GM10248 (cell line): ENCODE measurements at regions of chr5 and their contacts with region 1.

Region 1: GRCh38 chr5:57779383-57780223 is 297.0 kb upstream of the ACTBL2 start:
- DNase-seq: no peak
- CTCF ChIP-seq: peak; percentile 40

Region 2: GRCh38 chr5:57741326-57741725 is 38.3 kb before region 1 on chr5:
- CTCF ChIA-PET with region 1: interaction called, 11 read pairs
- POLR2A ChIA-PET with region 1: no interaction called
- DNase-seq: no peak
- CTCF ChIP-seq: no peak

Region 3: DNA sequence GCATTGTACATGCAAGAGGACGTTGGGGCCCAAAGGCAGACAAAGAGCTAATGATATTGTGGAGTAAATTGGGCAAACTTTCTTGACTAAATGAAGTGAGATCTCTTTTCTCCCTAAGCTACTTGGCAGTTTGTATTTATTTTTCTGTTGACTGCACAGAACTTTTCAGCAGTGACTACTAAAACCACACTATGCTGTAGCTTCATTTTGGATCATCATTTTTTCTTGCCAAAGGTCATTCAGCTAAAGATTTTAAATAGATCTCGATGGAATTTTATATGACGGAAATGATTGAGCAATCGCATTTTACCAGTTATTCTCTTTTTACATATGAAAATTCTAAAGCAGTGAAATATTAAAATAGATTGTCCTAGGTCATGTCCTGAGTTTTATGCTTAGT is 10.9 kb before region 1 on chr5:
- CTCF ChIA-PET with region 1: interaction called, 15 read pairs
- POLR2A ChIA-PET with region 1: no interaction called
- DNase-seq: no peak
- CTCF ChIP-seq: no peak

Region 4: DNA sequence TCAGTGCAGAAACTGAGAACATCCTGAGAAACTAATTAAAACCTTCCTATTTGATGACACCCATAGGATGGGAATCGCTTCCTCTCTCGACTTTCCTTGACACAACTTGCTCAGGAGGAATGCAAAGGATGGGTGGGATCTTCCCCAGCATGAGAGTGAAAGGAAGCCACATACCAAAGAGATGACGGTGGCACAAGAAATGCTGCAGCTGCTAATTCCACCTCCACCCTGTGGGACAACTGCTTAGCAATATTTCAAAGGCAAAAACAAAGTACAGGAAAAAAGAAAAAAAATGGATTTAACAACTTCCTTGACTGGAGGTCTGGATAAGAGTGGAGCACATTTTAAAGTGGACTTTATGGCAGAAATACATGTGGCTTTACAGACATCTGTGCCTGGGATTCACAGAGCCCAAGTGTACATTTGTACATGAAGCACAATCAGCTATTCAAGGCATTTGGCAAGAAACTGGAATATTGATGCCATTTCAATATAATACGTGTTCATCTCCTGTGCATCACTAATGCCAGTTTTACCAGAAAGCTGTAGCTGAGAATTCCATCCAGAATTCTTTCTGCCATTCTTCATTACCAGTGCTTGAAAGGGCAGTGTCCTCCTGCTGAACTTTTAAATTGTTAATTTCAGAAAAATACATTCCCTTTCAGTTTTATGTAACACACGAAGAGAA is 62.2 kb after region 1 on chr5:
- CTCF ChIA-PET with region 1: no interaction called
- POLR2A ChIA-PET with region 1: no interaction called
- DNase-seq: no peak
- CTCF ChIP-seq: no peak

Region 5: DNA sequence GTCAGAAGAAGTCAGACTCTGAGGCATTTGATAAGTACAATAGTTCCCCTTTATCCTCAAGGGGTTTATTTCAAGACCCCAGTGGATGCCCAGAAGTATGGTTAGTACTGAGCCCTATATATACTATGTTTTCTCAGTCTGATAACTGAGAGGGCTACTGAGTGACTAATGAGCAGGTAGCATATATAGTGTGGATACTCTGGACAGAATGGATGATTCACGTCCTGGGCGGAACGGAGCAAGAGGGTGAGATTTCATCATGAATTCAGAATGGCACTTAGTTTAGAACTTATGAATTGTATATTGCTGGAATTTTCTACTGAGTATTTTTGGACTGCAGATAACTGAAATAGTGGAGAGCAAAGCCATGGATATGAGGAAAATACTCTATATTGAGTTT is 222.7 kb after region 1 on chr5:
- CTCF ChIA-PET with region 1: no interaction called
- POLR2A ChIA-PET with region 1: no interaction called
- DNase-seq: no peak
- CTCF ChIP-seq: no peak